Activated B cell treated with CpG ODN at 0.5 μM for 24 hours (primary cell): ENCODE measurements at regions of chr5 and their contacts with region 1.

Region 1: GRCh38 chr5:123089914-123090670 is 1.1 kb downstream of the PRDM6 start:
- DNase-seq: no peak
- ATAC-seq: peak; percentile 31
- H3K4me3 Mint-ChIP-seq: peak overlapping the region; percentile 41
- H3K27ac Mint-ChIP-seq: no peak overlapping the region
- H3K4me1 Mint-ChIP-seq: peaks cover 50% of the 10 kb centered on the region
- H3K27me3 Mint-ChIP-seq: peaks cover 67% of the 10 kb centered on the region
- CTCF ChIP-seq: no peak

Region 2: GRCh38 chr5:122896598-122897282 is 193.4 kb before region 1 on chr5:
- CTCF ChIA-PET with region 1: no interaction called
- POLR2A ChIA-PET with region 1: no interaction called
- intact Hi-C with region 1: loop called (anchors 10 kb)
- DNase-seq: no peak
- ATAC-seq: no peak
- H3K4me3 Mint-ChIP-seq: no peak overlapping the region
- H3K27ac Mint-ChIP-seq: no peak overlapping the region
- H3K4me1 Mint-ChIP-seq: no peaks in the 10 kb centered on the region
- H3K27me3 Mint-ChIP-seq: no peaks in the 10 kb centered on the region
- CTCF ChIP-seq: no peak